ENCODE measurements at regions of chr2 and their contacts with region 1.

Region 1: GRCh38 chr2:19863303-19864041 is 38.3 kb downstream of the TTC32 start:
- DNase-seq: peak; percentile 63
- H3K4me3 Mint-ChIP-seq: no peak overlapping the region
- H3K27ac Mint-ChIP-seq: peak overlapping the region; percentile 22
- H3K4me1 Mint-ChIP-seq: peaks cover 17% of the 10 kb centered on the region
- H3K27me3 Mint-ChIP-seq: no peaks in the 10 kb centered on the region
- CTCF ChIP-seq: peak; percentile 99

Region 2: DNA sequence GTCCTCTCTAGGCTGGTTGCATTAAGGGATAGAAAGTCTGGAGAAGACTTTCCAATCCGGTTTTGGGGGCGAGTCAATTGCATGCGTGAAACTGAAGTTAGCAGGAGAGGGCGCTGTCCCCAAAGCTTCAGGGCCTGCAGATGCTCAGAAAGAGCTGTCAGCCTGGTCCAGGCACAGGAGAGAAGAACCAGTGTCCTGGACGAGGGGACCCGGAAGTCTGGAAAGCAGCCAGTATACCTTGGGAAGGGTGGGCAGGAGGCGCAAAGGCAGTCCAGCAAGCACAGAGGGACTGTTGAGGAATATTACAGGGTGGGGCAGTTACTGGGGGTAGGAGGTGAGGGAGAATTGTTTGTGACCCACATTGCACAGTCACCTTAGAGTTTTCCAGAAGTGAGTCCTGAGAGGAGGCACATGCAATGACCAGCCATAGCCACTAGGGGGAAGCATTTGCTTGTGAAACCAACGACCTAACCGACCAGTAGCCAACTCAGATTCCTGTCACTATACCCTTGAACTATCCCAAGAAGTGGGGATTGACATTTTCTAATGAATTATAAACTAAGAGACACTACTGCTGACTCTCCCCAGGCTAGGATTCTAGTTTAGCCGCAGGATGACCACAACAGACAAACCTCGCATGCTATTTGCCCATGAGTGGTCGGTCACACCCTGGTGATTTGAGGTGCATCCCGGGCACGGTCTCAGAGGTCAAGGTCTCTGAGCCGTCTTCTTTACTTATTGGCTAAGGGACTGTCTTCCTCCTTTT is 1475.8 kb before region 1 on chr2:
- CTCF ChIA-PET with region 1: interaction called, 4 read pairs
- POLR2A ChIA-PET with region 1: no interaction called
- intact Hi-C with region 1: loop called (anchors 1 kb)
- DNase-seq: peak; percentile 75
- H3K4me3 Mint-ChIP-seq: no peak overlapping the region
- H3K27ac Mint-ChIP-seq: no peak overlapping the region
- H3K4me1 Mint-ChIP-seq: peaks cover 6% of the 10 kb centered on the region
- H3K27me3 Mint-ChIP-seq: peaks cover 4% of the 10 kb centered on the region
- CTCF ChIP-seq: peak; percentile 95

Region 3: DNA sequence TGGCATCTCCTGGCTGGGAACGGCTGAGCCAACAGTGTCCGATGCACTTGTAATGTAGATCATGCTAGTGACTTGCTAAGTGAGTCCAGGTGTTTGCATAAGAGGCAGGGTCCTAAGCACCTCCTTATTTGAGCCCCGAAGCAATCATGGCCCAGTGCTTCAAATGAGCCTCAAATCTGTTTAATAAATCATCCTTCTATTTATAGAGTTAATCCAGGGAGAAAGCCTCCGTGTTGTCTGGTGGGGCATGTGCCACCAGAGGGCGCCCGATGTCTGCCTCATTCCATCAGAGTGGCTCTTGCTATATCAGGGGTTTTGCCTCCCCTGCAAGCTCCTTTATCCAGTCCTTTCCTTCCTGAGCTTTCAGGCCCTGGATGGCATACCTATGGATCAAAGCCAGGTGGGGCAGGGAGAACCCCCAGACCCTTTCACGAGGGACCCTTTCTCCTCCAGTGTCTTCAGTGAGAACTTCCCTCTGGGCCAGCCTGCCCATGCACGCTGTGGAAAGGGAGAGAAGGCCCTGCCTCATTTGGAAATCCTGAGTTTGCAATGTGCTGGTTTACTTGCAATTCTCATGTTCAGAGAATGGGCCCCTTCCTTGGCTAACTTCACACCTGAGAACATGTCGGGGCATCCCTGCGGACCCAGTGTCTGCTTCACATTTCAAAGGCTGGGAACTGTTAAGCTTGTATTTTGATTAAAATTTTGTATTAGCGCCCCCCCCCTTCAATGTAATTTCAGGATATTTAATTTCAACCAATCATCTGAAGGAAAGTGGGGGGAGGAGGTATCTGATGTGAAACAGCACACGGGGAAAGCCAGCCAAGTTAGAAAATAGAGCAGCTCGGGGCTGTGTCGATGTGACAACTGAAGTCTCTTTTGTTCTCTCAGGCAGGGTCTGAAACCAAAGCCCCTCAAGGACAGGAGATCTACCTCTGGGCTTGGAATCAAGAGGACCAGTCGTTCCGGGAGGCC is 1342.7 kb before region 1 on chr2:
- CTCF ChIA-PET with region 1: interaction called, 36 read pairs
- POLR2A ChIA-PET with region 1: no interaction called
- intact Hi-C with region 1: loop called (anchors 1 kb)
- DNase-seq: peak; percentile 78
- H3K4me3 Mint-ChIP-seq: no peak overlapping the region
- H3K27ac Mint-ChIP-seq: no peak overlapping the region
- H3K4me1 Mint-ChIP-seq: no peaks in the 10 kb centered on the region
- H3K27me3 Mint-ChIP-seq: no peaks in the 10 kb centered on the region
- CTCF ChIP-seq: peak; percentile 95

Region 4: DNA sequence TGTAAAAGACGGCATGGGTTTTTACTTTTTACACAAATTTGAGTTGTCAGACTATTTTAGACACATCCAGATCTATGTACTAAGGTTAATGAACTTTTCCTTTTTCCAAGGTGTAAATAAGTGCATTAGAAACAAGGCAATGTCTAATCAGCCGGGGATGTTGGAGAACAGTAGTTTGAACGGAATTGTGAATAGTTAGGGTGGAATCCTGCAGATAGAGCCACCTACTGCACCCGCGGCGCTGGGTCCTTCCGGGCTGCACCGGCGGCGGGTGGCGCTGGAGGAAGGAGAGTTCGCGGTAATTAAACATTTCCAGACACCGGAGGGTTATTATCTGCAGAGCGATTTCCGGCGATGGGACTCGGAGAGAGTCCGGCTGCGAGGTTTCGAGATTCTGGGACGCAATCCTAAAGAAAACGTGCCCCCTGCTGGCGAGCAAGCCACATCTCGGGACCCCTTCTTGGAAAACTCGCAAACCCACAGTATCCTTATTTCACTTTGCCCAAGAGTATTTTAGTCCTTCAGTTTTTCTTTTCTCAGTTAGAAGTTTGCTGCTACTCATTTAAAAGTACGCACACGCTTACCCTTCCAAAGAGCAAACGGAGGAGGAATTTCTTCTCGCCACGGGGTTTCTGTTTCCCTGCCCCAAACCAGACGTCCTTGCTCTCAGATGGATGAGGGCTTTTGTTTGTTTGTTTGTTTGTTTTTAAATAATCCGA is 500.6 kb before region 1 on chr2:
- CTCF ChIA-PET with region 1: interaction called, 69 read pairs
- POLR2A ChIA-PET with region 1: no interaction called
- intact Hi-C with region 1: no loop called
- DNase-seq: peak; percentile 88
- H3K4me3 Mint-ChIP-seq: peak overlapping the region; percentile 87
- H3K27ac Mint-ChIP-seq: no peak overlapping the region
- H3K4me1 Mint-ChIP-seq: peaks cover 6% of the 10 kb centered on the region
- H3K27me3 Mint-ChIP-seq: no peaks in the 10 kb centered on the region
- CTCF ChIP-seq: peak; percentile 70

Region 5: GRCh38 chr2:19667085-19667484 is 196.4 kb before region 1 on chr2:
- CTCF ChIA-PET with region 1: interaction called, 3 read pairs
- POLR2A ChIA-PET with region 1: no interaction called
- intact Hi-C with region 1: loop called (anchors 1 kb)
- DNase-seq: peak; percentile 59
- H3K4me3 Mint-ChIP-seq: no peak overlapping the region
- H3K27ac Mint-ChIP-seq: no peak overlapping the region
- H3K4me1 Mint-ChIP-seq: no peaks in the 10 kb centered on the region
- H3K27me3 Mint-ChIP-seq: no peaks in the 10 kb centered on the region
- CTCF ChIP-seq: peak; percentile 60

Region 6: GRCh38 chr2:19851116-19851695 is 12.3 kb before region 1 on chr2:
- CTCF ChIA-PET with region 1: interaction called, 14 read pairs
- POLR2A ChIA-PET with region 1: interaction called, 3 read pairs
- intact Hi-C with region 1: no loop called
- DNase-seq: peak; percentile 38
- H3K4me3 Mint-ChIP-seq: no peak overlapping the region
- H3K27ac Mint-ChIP-seq: no peak overlapping the region
- H3K4me1 Mint-ChIP-seq: no peaks in the 10 kb centered on the region
- H3K27me3 Mint-ChIP-seq: no peaks in the 10 kb centered on the region
- CTCF ChIP-seq: peak; percentile 17

Measured in MCF 10A (cell line).